RWPE1 (cell line): ENCODE measurements at regions of chr20 and their contacts with region 1.

Region 1: DNA sequence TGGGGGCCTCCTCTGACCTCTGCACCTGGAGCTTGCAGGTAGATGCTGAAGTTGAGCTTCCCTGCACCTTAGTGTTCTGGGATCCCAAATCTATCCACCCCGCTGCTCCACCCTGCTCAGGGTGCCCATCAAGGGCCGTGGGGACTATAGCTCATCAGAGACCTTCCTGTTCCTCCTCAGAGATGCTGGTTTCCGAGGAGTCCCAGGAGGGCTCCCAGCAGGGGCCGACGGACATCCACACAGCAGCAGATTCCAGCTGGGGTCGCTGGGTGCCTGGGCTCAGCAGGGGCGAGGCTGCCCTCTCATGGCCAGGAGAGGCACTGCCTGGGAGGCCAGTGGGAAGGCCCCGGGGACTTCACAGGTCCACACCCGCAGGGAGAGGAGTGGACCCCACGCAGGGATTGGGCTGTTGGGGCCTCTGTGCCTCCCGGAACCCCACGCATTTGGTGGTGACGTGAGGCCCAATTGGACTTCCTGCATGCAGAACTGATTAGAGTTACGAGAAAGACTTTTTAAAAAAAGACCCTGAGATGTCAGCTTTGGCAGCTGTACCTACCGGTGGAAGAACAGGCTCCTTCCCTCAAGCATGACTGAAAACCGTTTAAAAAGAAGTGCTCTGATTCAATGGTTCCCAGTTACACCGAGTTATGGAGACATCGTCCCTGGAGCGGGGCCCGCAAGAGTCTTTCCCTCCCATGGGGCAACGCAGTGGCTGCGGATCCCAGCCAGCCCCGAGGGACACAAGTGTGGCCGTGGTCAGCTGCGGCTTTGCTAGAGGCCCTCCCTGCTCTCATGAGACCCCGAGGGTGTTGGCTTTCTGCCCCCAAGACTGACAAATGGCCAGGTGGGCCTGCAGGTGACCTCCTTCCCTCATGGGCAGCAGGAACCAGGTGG is 25.3 kb upstream of the SLCO4A1 start:
- DNase-seq: peak; percentile 87
- H3K27ac ChIP-seq: peak overlapping the region; percentile 71
- CTCF ChIP-seq: peak; percentile 100

Region 2: DNA sequence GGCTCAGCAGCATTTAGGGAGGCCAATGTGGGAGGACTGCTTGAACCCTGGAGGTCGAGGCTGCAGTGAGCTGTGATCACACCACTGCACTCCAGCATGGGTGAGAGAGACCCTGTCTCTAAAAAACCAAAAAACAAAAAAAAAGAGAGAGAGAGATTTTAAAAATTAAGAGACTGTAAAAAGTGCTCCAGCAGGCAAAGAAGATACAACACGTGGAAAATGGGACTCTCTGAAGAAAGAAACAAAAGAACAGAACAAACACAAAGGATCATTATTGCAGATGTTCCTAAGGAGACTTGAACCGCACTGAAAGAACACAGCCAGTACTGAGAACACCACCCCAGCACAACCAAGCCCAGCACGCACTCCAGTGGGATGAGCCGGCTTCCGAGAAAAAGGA is 625.5 kb before region 1 on chr20:
- CTCF ChIA-PET with region 1: no interaction called
- POLR2A ChIA-PET with region 1: no interaction called
- DNase-seq: no peak
- H3K27ac ChIP-seq: no peak overlapping the region
- CTCF ChIP-seq: no peak

Region 3: DNA sequence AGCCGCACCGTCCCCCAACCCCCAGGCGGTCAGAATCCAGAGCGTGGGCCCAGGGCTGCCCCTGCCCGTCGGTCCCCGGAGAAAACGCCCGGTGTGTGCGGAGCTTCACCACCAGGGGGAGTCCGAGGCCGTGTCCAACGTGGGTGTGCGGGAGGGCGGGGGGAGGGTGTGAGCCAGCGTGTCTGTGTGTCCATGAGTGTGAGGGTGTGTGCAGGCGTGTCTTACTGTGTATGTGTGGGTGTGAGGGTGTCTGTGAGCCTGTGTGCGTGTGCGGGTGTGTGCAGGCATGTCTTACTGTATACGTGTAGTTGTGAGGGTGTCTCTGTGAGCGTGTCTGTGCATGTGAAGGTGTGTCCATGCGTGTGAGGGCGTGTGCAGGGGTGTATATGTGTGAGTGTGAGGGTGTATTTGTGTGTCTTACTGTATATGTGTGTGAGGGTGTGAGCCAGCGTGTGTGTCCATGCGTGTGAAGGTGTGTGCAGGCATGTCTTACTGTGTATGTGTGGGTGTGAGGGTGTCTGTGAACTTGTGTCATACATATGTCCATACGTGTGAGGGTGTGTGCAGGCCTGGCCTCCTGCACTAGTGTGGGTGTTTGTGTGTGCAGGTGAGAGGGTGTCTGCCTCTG is 116.6 kb before region 1 on chr20:
- CTCF ChIA-PET with region 1: interaction called, 32 read pairs
- POLR2A ChIA-PET with region 1: no interaction called
- DNase-seq: peak; percentile 86
- H3K27ac ChIP-seq: peak overlapping the region; percentile 34
- CTCF ChIP-seq: peak; percentile 99

Region 4: DNA sequence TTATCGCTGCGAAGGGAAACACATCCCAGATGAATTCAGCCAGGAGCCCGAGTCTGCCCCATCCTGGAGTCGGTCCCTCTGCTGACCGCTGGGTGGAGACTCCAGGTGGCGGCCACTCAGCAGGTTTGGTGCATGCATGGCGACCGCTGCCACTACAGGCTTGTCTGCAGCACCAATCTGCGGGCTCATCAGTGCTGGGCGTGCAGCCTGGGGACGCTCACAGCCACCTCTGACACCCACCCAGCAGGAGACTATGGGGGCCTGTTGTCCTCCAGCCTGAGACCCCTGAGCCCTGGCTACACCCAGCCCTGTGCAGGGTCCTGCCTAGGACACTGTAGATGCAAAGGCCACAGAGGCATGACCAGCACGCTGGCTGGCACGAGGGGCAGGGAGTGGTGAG is 100.6 kb before region 1 on chr20:
- CTCF ChIA-PET with region 1: interaction called, 10 read pairs
- POLR2A ChIA-PET with region 1: no interaction called
- DNase-seq: peak; percentile 48
- H3K27ac ChIP-seq: no peak overlapping the region
- CTCF ChIP-seq: no peak; the same call in 1 of the 2 replicates

Region 5: DNA sequence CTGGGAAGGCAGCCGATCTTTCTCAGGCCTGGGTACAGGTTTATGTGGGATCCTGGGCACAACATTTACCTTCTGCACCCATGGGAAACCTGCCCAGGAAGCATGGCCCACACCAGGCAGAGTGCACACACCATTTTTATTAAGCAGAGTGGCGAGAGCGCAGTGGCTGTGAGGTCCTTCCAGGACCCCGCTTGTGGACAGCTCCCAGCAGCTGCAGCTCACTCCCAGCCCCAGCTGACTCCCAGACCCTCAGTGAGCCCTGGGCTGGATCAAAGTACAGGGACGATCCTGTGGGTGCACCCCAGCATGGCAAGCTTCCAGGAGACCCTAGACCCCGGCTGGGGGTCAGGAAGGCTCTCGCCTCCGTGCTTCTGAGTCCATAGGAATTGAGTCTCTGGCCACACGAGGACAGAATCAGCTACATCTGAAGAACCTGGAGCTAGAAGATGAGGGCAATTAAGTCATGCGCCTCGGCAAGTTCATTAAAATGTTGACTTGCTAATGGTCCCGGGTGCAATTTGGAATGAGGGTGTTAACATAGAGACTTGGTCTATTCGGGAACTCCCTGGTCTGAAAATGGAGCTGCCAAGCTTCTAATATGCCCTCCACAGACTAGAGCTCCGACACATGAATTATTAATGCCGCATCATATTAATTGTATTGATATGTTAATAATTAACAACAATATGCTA is 40.0 kb before region 1 on chr20:
- CTCF ChIA-PET with region 1: interaction called, 18 read pairs
- POLR2A ChIA-PET with region 1: no interaction called
- DNase-seq: no peak
- H3K27ac ChIP-seq: no peak overlapping the region
- CTCF ChIP-seq: no peak

Region 6: GRCh38 chr20:62590301-62591121 is 26.5 kb before region 1 on chr20:
- CTCF ChIA-PET with region 1: interaction called, 18 read pairs
- POLR2A ChIA-PET with region 1: no interaction called
- DNase-seq: peak; percentile 99
- H3K27ac ChIP-seq: peak overlapping the region; percentile 79
- CTCF ChIP-seq: no peak

Region 7: DNA sequence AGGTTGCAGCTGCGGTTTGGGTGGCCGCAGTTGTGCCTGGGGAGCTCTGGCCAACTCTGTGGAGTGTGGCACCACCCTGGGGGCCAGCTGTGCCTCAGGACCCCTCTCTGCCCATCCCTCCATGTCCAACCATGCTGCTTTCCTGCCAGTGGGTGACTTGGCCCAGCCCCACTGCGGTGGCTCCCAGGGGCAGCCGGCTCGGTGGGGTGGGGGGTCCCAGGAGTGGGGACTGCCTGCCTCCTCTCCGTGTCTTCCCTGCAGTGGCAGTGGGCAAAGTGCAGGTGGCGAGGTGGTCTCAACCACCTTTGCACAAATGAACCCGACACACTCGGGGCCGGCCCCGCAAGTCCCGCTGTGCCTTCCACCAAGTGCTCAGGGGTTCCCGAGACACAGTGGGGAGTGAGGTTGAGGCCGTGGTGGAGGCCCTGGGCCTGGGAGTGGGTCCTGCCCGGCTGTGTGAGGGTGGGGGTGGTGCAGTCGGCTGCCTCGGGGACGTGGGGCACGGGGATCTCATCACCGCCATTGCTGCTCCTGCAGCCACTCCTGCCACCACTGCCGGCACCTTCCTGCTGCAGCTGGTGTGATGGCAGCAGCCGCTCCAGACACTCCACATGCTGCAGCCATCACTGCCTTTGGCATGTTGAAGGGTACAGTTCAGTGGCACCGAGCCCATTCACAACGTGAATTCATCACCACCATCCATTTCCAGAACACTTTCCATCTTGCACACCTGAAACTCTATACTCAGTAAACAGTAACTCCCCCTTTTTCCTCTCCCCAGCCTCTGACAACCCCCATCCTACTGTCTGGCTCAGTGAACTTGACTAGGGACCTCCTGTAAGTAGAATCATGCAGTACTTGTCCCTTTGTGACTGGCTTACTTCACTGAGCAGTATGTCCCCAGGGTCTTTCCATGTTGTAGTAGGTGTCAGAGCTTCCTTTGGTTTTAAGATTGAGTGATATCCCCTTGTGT is 14.6 kb after region 1 on chr20:
- CTCF ChIA-PET with region 1: interaction called, 13 read pairs
- POLR2A ChIA-PET with region 1: no interaction called
- DNase-seq: no peak
- H3K27ac ChIP-seq: no peak overlapping the region
- CTCF ChIP-seq: no peak

Region 8: GRCh38 chr20:62734881-62735821 is 118.2 kb after region 1 on chr20:
- CTCF ChIA-PET with region 1: no interaction called
- POLR2A ChIA-PET with region 1: no interaction called
- DNase-seq: peak; percentile 47
- H3K27ac ChIP-seq: peak overlapping the region; percentile 100
- CTCF ChIP-seq: no peak